Left ventricle myocardium inferior (tissue), 1 donor: ENCODE measurements at regions of chr2 and their contacts with region 1.

Region 1: DNA sequence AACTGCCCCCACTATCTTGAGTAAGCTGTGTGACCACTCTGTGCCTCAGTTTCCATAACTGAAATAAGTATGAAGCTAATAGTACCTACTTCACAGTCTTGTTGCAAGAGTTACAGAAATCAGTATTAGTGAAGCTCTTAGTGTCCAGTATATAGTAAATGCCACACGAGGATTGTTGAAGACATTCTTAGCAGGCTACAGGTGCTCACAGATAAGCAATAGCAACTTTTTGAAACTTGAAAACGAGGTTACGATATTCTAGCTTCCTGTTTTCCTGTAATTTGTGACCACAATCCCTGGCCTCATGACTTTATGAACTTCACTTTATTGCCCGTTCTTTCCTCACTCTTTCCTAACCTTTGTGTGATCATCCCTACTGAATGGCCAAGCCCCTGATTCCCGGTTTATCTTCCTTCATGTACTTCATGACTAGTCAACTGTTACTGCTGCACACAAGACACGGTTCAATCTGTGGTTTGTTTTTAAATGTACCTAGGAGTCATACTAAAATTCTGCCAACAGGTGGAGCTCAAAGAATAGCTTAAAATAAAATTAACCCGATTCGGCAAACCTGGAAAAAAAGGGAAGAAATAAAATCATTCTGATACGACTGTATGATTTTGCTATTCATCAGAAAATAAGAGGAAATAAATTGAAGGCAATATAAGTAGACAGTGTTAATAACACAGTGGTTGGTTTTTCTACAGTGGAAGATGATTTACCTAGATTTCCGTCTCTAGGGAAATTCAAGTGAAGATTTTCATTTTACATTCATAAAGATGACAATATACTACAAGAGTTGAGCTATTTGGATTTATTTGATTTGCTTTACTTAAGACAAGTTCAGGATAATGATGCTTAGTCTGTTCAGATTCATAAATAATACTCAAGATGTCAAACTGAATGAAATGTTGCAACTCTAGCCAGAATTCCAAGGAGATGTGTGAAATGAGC is 38.1 kb upstream of the STAT1 start:
- DNase-seq: no peak
- H3K4me3 ChIP-seq: no peak overlapping the region
- H3K27ac ChIP-seq: no peak overlapping the region
- H3K4me1 ChIP-seq: peaks cover 13% of the 10 kb centered on the region
- H3K27me3 ChIP-seq: peaks cover 19% of the 10 kb centered on the region
- CTCF ChIP-seq: peak; percentile 71

Region 2: DNA sequence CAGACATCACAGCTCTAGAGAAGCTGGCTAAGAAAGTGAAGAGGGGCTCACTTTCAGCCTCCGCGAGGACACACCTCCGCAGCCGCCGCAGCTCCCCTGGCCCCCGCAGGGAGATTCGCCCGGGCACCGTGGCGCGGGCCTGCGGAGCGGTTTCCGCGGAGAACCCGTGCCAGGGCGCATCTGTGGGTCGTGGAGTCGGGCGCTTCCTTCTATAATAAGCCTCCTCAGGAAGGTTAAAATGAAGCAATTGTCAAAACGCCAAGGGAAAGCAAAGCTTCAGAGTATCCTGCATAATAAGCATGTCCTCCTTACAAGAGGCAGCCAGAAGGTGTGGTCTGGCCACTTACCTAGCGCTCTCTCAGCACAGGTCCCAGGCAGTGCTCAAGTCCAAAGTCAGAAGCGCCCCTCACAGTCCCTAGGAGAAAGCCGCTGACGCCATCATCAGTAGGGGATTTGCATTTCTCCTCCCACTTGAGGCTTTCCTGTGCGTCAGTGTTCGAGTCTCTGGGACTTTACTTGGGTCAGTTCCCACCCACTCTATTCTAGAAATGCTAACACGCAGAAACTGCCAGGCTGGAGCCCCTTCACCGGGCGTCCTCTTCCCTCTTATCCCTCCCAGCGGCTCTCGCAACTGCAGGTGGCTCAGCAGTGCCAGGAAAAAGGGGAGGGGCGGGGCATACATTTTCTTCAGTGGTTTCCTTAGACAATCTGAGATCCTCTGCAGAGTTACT is 98.7 kb after region 1 on chr2 and contains the start of gene STAT4:
- intact Hi-C with region 1: loop called (anchors 10 kb)
- DNase-seq: no peak
- H3K4me3 ChIP-seq: peak within 1 kb of the TSS; percentile 68
- H3K27ac ChIP-seq: no peak within 1 kb of the TSS
- H3K4me1 ChIP-seq: peaks cover 24% of the 10 kb centered on the region
- H3K27me3 ChIP-seq: no peaks in the 10 kb centered on the region
- CTCF ChIP-seq: no peak
- total RNA-seq, gene STAT4: 0.82 TPM

Region 3: DNA sequence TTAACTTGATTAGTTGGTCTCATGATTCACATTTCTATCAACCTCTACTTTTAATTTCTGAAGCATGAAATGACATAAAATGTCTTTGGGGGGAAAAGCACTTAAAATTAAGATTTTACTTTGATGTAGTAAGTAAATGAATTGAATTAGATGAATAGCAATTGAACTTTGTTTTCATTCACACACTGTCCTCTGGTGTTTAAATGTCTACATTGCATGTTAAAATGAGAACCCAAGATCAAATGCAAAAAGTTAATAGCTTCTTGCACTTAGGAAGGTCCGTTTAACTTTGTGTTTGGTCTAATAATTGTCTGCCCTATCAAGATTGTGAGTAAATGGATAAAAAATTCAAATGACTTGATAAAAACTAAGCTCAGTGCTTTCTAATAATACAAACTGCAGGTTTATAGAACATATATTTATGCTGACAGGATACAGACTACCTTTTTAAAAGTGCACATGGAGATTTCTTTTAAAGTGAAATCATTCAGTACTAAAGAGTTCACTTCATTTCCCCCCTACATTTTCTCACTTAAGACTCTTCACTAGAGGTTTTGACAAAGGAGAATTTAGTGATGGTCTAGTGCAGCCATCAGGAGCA is 469.6 kb after region 1 on chr2:
- intact Hi-C with region 1: loop called (anchors 10 kb)
- DNase-seq: no peak
- H3K4me3 ChIP-seq: no peak overlapping the region
- H3K27ac ChIP-seq: no peak overlapping the region
- H3K4me1 ChIP-seq: no peaks in the 10 kb centered on the region
- H3K27me3 ChIP-seq: no peaks in the 10 kb centered on the region
- CTCF ChIP-seq: peak; percentile 92